CD8-positive, alpha-beta T cell (primary cell): ENCODE measurements at regions of chr11 and their contacts with region 1.

Region 1: GRCh38 chr11:108697872-108698473 is 33.1 kb downstream of the DDX10 start:
- DNase-seq: peak in 4 of 9 experiments; percentile 13 to 58 (median 40)
- ATAC-seq: peak; percentile 62
- H3K4me3 ChIP-seq: no peak overlapping the region
- H3K4me3 Mint-ChIP-seq: no peak overlapping the region
- H3K27ac ChIP-seq: no peak overlapping the region
- H3K27ac Mint-ChIP-seq: no peak overlapping the region
- H3K4me1 ChIP-seq: no peaks in the 10 kb centered on the region
- H3K4me1 Mint-ChIP-seq: no peaks in the 10 kb centered on the region
- H3K27me3 ChIP-seq: no peaks in the 10 kb centered on the region
- H3K27me3 Mint-ChIP-seq: no peaks in the 10 kb centered on the region
- CTCF ChIP-seq: peak; percentile 61

Region 2: DNA sequence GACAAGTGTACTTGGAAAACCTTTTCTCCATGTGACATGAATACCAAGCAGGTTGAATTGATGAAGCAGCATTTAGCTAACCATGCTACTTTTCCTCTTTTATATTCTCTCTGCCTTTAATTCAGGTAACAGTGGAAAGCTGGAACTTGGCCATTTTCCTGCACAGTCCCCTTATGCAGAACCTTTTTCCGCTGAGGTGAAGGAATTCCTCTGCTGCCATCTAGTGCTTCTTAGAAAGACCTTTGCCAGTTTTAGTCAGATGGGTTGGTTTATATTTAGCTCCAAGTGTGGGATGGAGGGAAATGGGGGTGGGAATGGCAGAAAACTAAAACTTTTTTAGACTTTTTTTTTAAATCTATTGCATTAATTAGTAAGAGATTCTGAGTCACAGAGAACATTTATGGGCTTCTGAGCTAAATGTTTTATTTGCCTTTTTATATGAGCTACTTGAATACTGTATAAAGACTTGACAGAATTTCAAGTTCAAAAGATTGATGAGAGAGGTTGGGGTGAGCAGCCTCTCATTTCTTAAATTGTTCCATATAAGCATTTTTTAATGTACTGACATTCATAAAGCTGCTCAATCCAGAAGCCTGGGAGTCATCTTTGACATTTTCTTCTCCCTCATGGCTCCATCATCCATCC is 1241.3 kb after region 1 on chr11:
- CTCF ChIA-PET with region 1: no interaction called
- POLR2A ChIA-PET with region 1: no interaction called
- intact Hi-C with region 1: loop called (anchors 5 to 10 kb)
- DNase-seq: peak in 1 of 9 experiments; percentile 7
- ATAC-seq: no peak
- H3K4me3 ChIP-seq: no peak overlapping the region
- H3K4me3 Mint-ChIP-seq: no peak overlapping the region
- H3K27ac ChIP-seq: no peak overlapping the region
- H3K27ac Mint-ChIP-seq: no peak overlapping the region
- H3K4me1 ChIP-seq: no peaks in the 10 kb centered on the region
- H3K4me1 Mint-ChIP-seq: no peaks in the 10 kb centered on the region
- H3K27me3 ChIP-seq: no peaks in the 10 kb centered on the region
- H3K27me3 Mint-ChIP-seq: peaks cover 12% of the 10 kb centered on the region
- CTCF ChIP-seq: no peak

Region 3: DNA sequence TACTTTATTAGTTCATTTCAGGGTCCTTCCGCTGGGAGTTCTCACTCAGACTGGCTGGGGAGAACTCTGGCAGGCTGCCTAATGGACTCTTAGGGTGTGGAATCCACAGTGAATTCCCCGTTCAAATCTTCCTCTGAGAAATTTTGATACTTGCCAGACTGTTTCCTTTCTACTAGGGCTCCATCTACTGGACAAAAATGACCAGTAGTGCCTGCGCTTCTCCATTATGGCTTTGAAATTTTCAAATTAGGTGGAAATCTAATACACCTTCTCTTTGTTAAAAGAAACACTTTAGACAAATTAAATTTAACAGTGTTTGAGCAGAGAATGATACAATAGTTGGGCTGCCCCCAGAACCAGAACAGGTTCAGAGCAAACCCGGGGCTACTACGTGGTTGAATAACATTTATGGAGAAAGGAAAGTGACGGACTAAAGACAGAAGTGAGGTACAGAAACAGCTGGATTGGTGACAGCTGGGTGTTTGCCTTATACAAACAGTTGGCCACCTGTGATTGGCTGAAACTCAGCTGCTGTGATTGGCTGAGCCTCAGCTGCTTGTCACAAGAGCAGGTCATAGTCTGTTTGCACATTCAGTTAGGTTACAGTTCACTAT is 1678.8 kb after region 1 on chr11:
- CTCF ChIA-PET with region 1: no interaction called
- POLR2A ChIA-PET with region 1: no interaction called
- intact Hi-C with region 1: loop called in 1 of 2 experiments (anchors 10 kb)
- DNase-seq: peak in 5 of 9 experiments; percentile 2 to 67 (median 13)
- ATAC-seq: no peak
- H3K4me3 ChIP-seq: no peak overlapping the region
- H3K4me3 Mint-ChIP-seq: no peak overlapping the region
- H3K27ac ChIP-seq: no peak overlapping the region
- H3K27ac Mint-ChIP-seq: no peak overlapping the region
- H3K4me1 ChIP-seq: no peaks in the 10 kb centered on the region
- H3K4me1 Mint-ChIP-seq: peaks cover 4% of the 10 kb centered on the region
- H3K27me3 ChIP-seq: no peaks in the 10 kb centered on the region
- H3K27me3 Mint-ChIP-seq: peaks cover 3% of the 10 kb centered on the region
- CTCF ChIP-seq: peak; percentile 77